H1 (cell line): ENCODE measurements at regions of chr4 and their contacts with region 1.

Region 1: GRCh38 chr4:82721819-82722423 is 76.7 kb downstream of the SCD5 start:
- DNase-seq: no peak
- H3K4me3 ChIP-seq: no peak overlapping the region
- H3K27ac ChIP-seq: no peak overlapping the region
- H3K4me1 ChIP-seq: no peaks in the 10 kb centered on the region
- H3K27me3 ChIP-seq: no peaks in the 10 kb centered on the region
- CTCF ChIP-seq: peak; percentile 8 to 54 (median 37); a peak in 2 of 4 replicates
- EP300 ChIP-seq: no peak
- POLR2A ChIP-seq: no peak
- RAD21 ChIP-seq: peak in 1 of 2 experiments; percentile 14; a peak in 2 of 4 replicates

Region 2: GRCh38 chr4:82706349-82707000 is 15.4 kb before region 1 on chr4:
- CTCF ChIA-PET with region 1: interaction called, 17 read pairs
- POLR2A ChIA-PET with region 1: no interaction called
- DNase-seq: no peak
- H3K4me3 ChIP-seq: no peak overlapping the region
- H3K27ac ChIP-seq: no peak overlapping the region
- H3K4me1 ChIP-seq: peaks cover 1 to 6% (median 3%) of the 10 kb centered on the region in 4 experiments; a peak in 6 of 7 replicates
- H3K27me3 ChIP-seq: no peaks in the 10 kb centered on the region
- CTCF ChIP-seq: no peak
- EP300 ChIP-seq: no peak
- POLR2A ChIP-seq: no peak
- RAD21 ChIP-seq: no peak

Region 3: GRCh38 chr4:82733636-82734035 is 11.7 kb after region 1 on chr4:
- CTCF ChIA-PET with region 1: interaction called, 57 read pairs
- POLR2A ChIA-PET with region 1: interaction called, 4 read pairs
- DNase-seq: no peak
- H3K4me3 ChIP-seq: no peak overlapping the region
- H3K27ac ChIP-seq: no peak overlapping the region
- H3K4me1 ChIP-seq: no peaks in the 10 kb centered on the region
- H3K27me3 ChIP-seq: no peaks in the 10 kb centered on the region
- CTCF ChIP-seq: no peak
- EP300 ChIP-seq: no peak
- POLR2A ChIP-seq: no peak
- RAD21 ChIP-seq: no peak

Region 4: DNA sequence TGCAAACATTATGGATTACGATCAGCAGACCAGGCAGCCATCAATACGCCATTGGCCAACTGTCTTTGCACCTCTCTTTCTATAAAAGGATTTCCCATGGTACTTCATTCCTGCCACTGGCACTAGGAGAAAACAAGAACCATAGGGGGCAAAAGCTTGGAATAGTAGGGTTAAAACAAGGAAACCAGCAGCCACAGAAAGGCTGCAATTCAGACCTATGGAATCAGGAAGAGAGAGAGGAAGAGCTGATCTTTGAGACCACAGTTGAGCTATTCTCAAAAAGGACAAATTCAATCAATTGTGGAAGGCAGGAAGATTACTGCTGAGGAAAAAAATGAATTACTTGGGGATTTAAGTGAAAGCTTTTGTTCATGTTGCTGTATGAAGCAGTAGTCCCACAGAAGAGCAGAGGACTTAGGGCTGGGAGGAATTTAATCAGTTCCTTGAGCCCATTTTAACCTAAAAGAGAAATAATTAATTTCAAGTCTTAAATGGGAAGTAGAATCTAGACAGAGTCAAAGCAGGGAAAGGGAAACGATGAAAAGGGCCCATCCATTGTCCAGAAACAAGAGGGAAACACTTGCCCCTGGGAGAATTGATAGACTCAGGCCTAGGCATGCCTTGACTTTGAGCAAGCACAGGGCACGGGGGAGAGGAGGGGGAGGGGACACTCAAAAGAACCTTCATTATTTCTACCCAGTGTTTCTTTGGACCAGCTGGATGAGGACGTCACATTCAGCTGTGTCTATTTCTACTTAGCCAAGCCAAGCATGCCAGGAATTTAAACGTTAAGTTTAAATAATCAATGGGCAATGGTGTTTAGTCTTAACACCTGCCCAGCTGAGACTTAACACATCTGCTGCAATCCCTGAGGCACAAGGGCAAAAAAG is 26.0 kb after region 1 on chr4:
- CTCF ChIA-PET with region 1: interaction called, 14 read pairs
- POLR2A ChIA-PET with region 1: no interaction called
- DNase-seq: no peak
- H3K4me3 ChIP-seq: no peak overlapping the region
- H3K27ac ChIP-seq: no peak overlapping the region
- H3K4me1 ChIP-seq: peaks cover 0 to 7% (median 3%) of the 10 kb centered on the region in 4 experiments; a peak in 4 of 7 replicates
- H3K27me3 ChIP-seq: no peaks in the 10 kb centered on the region
- CTCF ChIP-seq: no peak
- EP300 ChIP-seq: no peak
- POLR2A ChIP-seq: no peak
- RAD21 ChIP-seq: no peak

Region 5: DNA sequence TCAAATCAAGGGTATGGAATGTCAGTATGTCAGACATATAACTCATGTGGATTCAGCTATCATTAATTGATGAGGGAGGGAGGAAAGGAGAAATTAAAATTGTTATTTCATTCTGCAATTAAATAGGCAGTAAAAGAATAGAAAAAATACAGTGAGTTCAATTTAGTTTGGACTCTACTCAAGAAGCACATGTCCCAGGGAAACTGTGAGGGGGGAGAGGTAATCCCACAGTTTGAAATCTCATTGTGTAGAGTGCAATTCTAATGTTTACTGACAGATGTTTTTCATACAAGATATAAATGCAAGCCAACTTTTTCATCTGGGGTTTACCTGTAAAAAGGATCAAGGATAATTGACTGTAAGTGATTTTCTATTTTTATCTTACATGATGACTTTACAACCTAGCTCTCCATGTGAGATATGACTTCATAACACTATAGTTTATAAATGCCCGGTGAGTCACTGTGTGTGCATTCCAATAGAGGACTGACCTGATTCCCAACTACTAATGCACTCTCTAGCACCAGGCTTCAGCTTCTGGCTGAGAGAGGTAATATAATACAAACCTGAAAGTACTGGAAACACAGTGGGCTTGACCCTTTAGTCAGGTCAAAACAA is 111.9 kb after region 1 on chr4:
- CTCF ChIA-PET with region 1: no interaction called
- POLR2A ChIA-PET with region 1: no interaction called
- DNase-seq: no peak
- H3K4me3 ChIP-seq: no peak overlapping the region
- H3K27ac ChIP-seq: no peak overlapping the region
- H3K4me1 ChIP-seq: no peaks in the 10 kb centered on the region
- H3K27me3 ChIP-seq: peaks cover 0 to 2% (median 0%) of the 10 kb centered on the region in 4 experiments; a peak in 1 of 7 replicates
- CTCF ChIP-seq: no peak
- EP300 ChIP-seq: no peak
- POLR2A ChIP-seq: no peak
- RAD21 ChIP-seq: no peak